MCF 10A (cell line): ENCODE measurements at regions of chr12 and their contacts with region 1.

Region 1: GRCh38 chr12:48890657-48891418 is 25.2 kb upstream of the RND1 start:
- DNase-seq: peak; percentile 76
- H3K4me3 Mint-ChIP-seq: no peak overlapping the region
- H3K27ac Mint-ChIP-seq: no peak overlapping the region
- H3K4me1 Mint-ChIP-seq: no peaks in the 10 kb centered on the region
- H3K27me3 Mint-ChIP-seq: peaks cover 20% of the 10 kb centered on the region
- CTCF ChIP-seq: peak; percentile 85

Region 2: GRCh38 chr12:48750769-48751735 is 139.8 kb before region 1 on chr12:
- CTCF ChIA-PET with region 1: interaction called, 3 read pairs
- POLR2A ChIA-PET with region 1: no interaction called
- intact Hi-C with region 1: loop called (anchors 5 kb)
- DNase-seq: no peak
- H3K4me3 Mint-ChIP-seq: no peak overlapping the region
- H3K27ac Mint-ChIP-seq: no peak overlapping the region
- H3K4me1 Mint-ChIP-seq: no peaks in the 10 kb centered on the region
- H3K27me3 Mint-ChIP-seq: peaks cover 10% of the 10 kb centered on the region
- CTCF ChIP-seq: no peak

Region 3: DNA sequence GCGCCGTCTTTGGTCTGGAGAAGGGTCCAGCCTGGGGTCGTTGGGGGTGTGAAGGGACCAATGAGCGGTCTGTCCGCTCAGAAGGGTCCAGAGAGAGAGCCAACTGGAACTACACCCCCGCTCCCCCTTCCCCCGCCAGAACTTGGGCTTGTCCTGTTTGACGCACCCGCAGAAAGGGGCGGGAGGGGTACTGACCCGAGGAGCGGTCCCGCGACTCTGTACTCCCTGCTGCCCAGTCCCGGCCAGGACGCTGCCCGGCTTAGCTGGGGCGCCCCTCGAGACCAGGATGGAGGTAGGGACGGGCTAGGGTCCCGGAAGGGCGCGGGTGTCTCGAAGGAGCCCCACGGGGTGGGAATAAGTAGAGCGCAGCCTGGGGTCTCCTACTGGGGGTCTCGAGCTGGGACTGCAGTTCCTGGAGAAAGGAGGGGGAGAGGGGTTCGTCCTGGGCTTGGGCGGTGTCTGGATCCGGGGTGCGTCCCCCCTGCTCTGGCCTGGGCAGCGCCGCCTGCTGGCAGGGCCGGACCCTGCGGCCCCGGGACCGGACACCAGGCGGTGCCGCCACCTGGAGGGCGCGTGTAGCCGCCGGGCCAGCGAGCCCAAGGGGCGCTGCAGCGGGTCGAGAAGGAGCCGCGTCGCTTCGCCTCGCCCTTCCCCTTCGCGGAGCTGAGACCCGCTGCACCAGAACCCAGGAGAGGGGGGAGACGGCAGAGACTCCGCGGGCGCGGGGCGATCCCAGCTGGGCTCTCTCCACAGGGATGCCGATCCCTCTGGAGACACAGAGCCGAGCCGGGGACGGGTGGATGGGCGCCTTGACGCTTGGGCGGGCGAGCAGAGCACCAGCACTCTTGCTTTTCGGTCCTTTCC is 76.3 kb before region 1 on chr12:
- CTCF ChIA-PET with region 1: interaction called, 13 read pairs
- POLR2A ChIA-PET with region 1: no interaction called
- intact Hi-C with region 1: no loop called
- DNase-seq: peak; percentile 77
- H3K4me3 Mint-ChIP-seq: peak overlapping the region; percentile 85
- H3K27ac Mint-ChIP-seq: peak overlapping the region; percentile 75
- H3K4me1 Mint-ChIP-seq: peaks cover 24% of the 10 kb centered on the region
- H3K27me3 Mint-ChIP-seq: no peaks in the 10 kb centered on the region
- CTCF ChIP-seq: peak; percentile 97

Region 4: GRCh38 chr12:48865434-48866290 is 25.2 kb before region 1 on chr12 and contains the start of gene RND1:
- CTCF ChIA-PET with region 1: interaction called, 15 read pairs
- POLR2A ChIA-PET with region 1: interaction called, 4 read pairs
- intact Hi-C with region 1: no loop called
- DNase-seq: peak; percentile 95
- H3K4me3 Mint-ChIP-seq: peak within 1 kb of the TSS; percentile 81
- H3K27ac Mint-ChIP-seq: peak within 1 kb of the TSS; percentile 71
- H3K4me1 Mint-ChIP-seq: peaks cover 16% of the 10 kb centered on the region
- H3K27me3 Mint-ChIP-seq: no peaks in the 10 kb centered on the region
- CTCF ChIP-seq: no peak
- total RNA-seq, gene RND1: 1.0 and 1.2 TPM in 2 replicates

Region 5: DNA sequence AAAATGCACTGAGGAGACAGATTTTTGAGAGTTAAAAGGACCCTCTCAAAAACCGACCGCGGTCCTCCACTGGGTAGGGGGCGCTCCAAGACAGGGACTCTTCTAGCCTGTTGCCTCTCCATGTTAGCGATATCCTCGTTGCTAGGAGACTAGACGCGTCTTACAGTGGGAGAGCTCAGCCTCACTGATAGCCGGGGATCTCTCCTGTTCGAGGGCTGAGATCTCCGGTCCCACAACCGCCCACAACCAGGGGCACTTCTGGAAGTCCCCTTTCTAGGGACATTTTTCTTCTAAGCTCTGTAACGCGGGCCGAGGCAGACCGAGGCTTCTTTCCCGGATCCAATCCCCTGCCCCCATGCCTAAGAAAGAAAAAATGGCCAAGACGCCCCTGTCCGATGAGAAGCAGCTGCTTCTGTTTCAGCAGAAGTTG is 13.2 kb after region 1 on chr12:
- CTCF ChIA-PET with region 1: interaction called, 21 read pairs
- POLR2A ChIA-PET with region 1: interaction called, 3 read pairs
- intact Hi-C with region 1: no loop called
- DNase-seq: peak; percentile 59
- H3K4me3 Mint-ChIP-seq: peak overlapping the region; percentile 61
- H3K27ac Mint-ChIP-seq: no peak overlapping the region
- H3K4me1 Mint-ChIP-seq: no peaks in the 10 kb centered on the region
- H3K27me3 Mint-ChIP-seq: no peaks in the 10 kb centered on the region
- CTCF ChIP-seq: peak; percentile 23

Region 6: DNA sequence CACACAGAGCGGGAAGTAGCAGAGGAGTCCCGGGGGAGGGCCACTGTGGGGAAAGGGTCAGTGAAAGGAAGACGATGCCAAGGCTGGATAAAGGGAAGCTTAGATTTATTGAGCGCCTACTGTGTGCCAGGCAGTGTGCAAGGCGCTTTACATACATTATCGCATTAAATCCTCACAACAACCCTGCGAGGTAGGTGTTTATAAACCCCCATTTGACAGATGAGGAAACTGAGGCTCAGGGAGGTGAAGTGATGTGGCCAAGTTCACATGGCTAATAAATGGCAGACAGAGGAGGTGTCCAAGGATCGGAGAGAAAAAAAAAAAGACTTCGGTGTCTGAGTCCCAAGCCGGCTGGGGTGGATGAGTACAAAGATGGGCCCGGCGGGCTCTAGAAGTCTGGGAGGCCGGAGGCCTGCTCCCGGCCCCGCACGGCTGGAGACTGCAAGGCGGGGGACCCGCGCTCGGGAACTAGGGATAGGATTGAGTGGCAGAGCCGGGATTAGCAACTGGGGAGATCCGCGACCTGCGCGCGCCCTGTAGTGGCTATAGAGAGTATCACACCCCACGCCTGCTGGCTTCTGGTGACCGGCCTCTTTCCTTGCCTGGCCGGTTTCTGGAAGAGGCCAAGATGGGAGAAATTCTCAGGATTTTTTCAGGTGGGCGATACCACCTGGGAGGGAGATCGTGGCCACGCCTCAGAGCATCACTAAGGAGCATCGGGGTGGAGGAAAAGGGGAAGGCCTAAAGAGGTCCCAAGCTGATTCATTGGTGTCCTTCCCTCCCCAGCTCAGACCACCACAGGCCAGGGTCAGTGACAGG is 104.4 kb after region 1 on chr12:
- CTCF ChIA-PET with region 1: interaction called, 5 read pairs
- POLR2A ChIA-PET with region 1: no interaction called
- intact Hi-C with region 1: loop called (anchors 10 kb)
- DNase-seq: peak; percentile 80
- H3K4me3 Mint-ChIP-seq: peak overlapping the region; percentile 71
- H3K27ac Mint-ChIP-seq: no peak overlapping the region
- H3K4me1 Mint-ChIP-seq: peaks cover 10% of the 10 kb centered on the region
- H3K27me3 Mint-ChIP-seq: peaks cover 3% of the 10 kb centered on the region
- CTCF ChIP-seq: peak; percentile 85